ENCODE measurements at regions of chr20 and their contacts with region 1.

Region 1: GRCh38 chr20:20052074-20052970 is at the starts of genes CFAP61 and CRNKL1:
- DNase-seq: peak; percentile 97
- H3K4me3 Mint-ChIP-seq: peak within 1 kb of the TSS; percentile 92
- H3K27ac Mint-ChIP-seq: peak within 1 kb of the TSS; percentile 90
- H3K4me1 Mint-ChIP-seq: peaks cover 21% of the 10 kb centered on the region
- H3K27me3 Mint-ChIP-seq: peaks cover 5% of the 10 kb centered on the region
- total RNA-seq, gene CFAP61: not detected
- total RNA-seq, gene CRNKL1: 20.4 to 21.8 TPM

Region 2: DNA sequence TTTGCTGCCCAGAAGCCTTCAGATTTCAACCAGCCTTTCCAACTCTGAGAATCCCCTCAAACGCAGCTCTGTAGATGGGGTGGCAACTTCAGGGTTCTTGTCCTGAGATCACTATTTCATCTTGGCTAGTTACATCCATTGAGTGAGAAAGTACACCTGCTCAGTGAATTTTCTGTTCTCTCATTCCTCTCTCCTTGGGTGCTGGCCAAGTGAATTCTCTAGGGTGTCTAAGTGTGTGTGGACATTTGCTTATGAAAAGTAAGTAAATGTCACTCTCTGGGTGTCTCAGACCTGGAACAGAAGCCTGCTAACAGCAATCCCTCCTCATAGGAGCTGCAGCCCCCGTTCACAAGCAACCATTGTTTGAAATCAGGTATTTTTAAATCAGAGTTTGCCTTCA is 290.5 kb before region 1 on chr20:
- CTCF ChIA-PET with region 1: no interaction called
- POLR2A ChIA-PET with region 1: no interaction called
- DNase-seq: no peak
- H3K4me3 Mint-ChIP-seq: no peak overlapping the region
- H3K27ac Mint-ChIP-seq: no peak overlapping the region
- H3K4me1 Mint-ChIP-seq: no peaks in the 10 kb centered on the region
- H3K27me3 Mint-ChIP-seq: peaks cover 35% of the 10 kb centered on the region

Region 3: GRCh38 chr20:20017001-20017843 is 35.1 kb before region 1 on chr20 and contains the start of gene NAA20:
- CTCF ChIA-PET with region 1: interaction called, 33 read pairs
- POLR2A ChIA-PET with region 1: interaction called, 43 read pairs
- DNase-seq: peak; percentile 91
- H3K4me3 Mint-ChIP-seq: peak within 1 kb of the TSS; percentile 87
- H3K27ac Mint-ChIP-seq: peak within 1 kb of the TSS; percentile 75
- H3K4me1 Mint-ChIP-seq: peaks cover 53% of the 10 kb centered on the region
- H3K27me3 Mint-ChIP-seq: peaks cover 2% of the 10 kb centered on the region
- total RNA-seq, gene NAA20: 53.3 to 53.7 TPM

Region 4: DNA sequence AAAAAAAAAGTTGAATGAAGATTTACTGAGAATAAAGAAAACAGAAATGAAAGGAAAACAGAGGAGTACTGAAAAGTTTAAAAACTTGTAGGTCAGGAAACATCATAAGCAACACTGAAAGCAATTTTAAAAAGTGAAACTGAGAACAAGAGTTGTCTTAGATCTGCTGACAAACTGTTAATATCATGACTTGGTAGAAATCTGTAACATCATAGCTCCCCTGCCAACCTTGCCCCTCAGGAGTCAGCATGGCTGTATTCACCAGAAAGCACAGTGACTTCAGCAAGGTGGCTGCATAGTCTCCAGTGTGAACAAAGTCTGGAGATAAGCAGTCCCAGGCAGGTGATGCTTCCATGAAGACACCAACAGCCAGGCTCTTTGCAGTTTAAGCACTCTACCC is 29.8 kb before region 1 on chr20:
- CTCF ChIA-PET with region 1: interaction called, 33 read pairs
- POLR2A ChIA-PET with region 1: interaction called, 43 read pairs
- DNase-seq: no peak
- H3K4me3 Mint-ChIP-seq: peak overlapping the region; percentile 43
- H3K27ac Mint-ChIP-seq: peak overlapping the region; percentile 81
- H3K4me1 Mint-ChIP-seq: peaks cover 65% of the 10 kb centered on the region
- H3K27me3 Mint-ChIP-seq: no peaks in the 10 kb centered on the region

Region 5: DNA sequence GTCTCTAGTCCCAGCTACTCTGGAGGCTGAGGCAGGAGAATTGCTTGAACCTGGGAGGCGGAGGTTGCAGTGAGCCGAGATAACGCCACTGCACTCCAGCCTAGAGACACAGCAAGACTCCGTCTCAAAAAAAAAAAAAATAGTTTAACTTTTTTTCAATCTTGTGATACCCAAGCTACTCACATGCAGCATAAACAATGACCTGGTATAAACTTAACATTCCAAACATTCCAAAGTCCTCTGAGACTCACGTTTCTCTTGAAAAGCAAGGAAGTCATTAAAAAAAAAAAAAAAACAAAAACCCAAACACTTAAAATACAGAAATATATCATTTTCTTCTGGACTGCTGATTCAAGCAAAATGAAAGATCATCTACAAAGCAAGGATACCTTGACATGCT is 14.4 kb before region 1 on chr20:
- CTCF ChIA-PET with region 1: interaction called, 5 read pairs
- POLR2A ChIA-PET with region 1: interaction called, 10 read pairs
- DNase-seq: no peak
- H3K4me3 Mint-ChIP-seq: no peak overlapping the region
- H3K27ac Mint-ChIP-seq: no peak overlapping the region
- H3K4me1 Mint-ChIP-seq: no peaks in the 10 kb centered on the region
- H3K27me3 Mint-ChIP-seq: no peaks in the 10 kb centered on the region